Activated CD4-positive, alpha-beta memory T cell treated with anti-CD3 and anti-CD28 coated beads for 36 hours (primary cell): ENCODE measurements at regions of chr7 and their contacts with region 1.

Region 1: GRCh38 chr7:92669616-92670165 is 79.5 kb upstream of the FAM133B start:
- DNase-seq: peak; percentile 26
- H3K4me3 Mint-ChIP-seq: no peak overlapping the region
- H3K27ac Mint-ChIP-seq: peak overlapping the region; percentile 63
- H3K4me1 Mint-ChIP-seq: peaks cover 67% of the 10 kb centered on the region
- H3K27me3 Mint-ChIP-seq: no peaks in the 10 kb centered on the region

Region 2: GRCh38 chr7:91940572-91941341 is 728.9 kb before region 1 on chr7 and contains the start of gene AKAP9:
- CTCF ChIA-PET with region 1: no interaction called
- POLR2A ChIA-PET with region 1: no interaction called
- intact Hi-C with region 1: no loop called
- DNase-seq: peak; percentile 93
- H3K4me3 Mint-ChIP-seq: peak within 1 kb of the TSS; percentile 92
- H3K27ac Mint-ChIP-seq: peak within 1 kb of the TSS; percentile 86
- H3K4me1 Mint-ChIP-seq: peaks cover 35% of the 10 kb centered on the region
- H3K27me3 Mint-ChIP-seq: peaks cover 1% of the 10 kb centered on the region
- total RNA-seq, gene AKAP9: 23.5 to 25.3 TPM

Region 3: GRCh38 chr7:92641921-92642511 is 27.7 kb before region 1 on chr7:
- CTCF ChIA-PET with region 1: no interaction called
- POLR2A ChIA-PET with region 1: interaction called, 6 read pairs
- intact Hi-C with region 1: loop called (anchors 1 kb)
- DNase-seq: peak; percentile 84
- H3K4me3 Mint-ChIP-seq: peak overlapping the region; percentile 9
- H3K27ac Mint-ChIP-seq: peak overlapping the region; percentile 96
- H3K4me1 Mint-ChIP-seq: peaks cover 86% of the 10 kb centered on the region
- H3K27me3 Mint-ChIP-seq: no peaks in the 10 kb centered on the region

Region 4: GRCh38 chr7:92648067-92648466 is 21.6 kb before region 1 on chr7:
- CTCF ChIA-PET with region 1: interaction called, 4 read pairs
- POLR2A ChIA-PET with region 1: interaction called, 6 read pairs
- intact Hi-C with region 1: loop called (anchors 1 kb)
- DNase-seq: no peak
- H3K4me3 Mint-ChIP-seq: peak overlapping the region; percentile 16
- H3K27ac Mint-ChIP-seq: peak overlapping the region; percentile 96
- H3K4me1 Mint-ChIP-seq: peaks cover 91% of the 10 kb centered on the region
- H3K27me3 Mint-ChIP-seq: no peaks in the 10 kb centered on the region